Right cardiac atrium (tissue), 5 donors: ENCODE measurements at regions of chr17 and their contacts with region 1.

Region 1: DNA sequence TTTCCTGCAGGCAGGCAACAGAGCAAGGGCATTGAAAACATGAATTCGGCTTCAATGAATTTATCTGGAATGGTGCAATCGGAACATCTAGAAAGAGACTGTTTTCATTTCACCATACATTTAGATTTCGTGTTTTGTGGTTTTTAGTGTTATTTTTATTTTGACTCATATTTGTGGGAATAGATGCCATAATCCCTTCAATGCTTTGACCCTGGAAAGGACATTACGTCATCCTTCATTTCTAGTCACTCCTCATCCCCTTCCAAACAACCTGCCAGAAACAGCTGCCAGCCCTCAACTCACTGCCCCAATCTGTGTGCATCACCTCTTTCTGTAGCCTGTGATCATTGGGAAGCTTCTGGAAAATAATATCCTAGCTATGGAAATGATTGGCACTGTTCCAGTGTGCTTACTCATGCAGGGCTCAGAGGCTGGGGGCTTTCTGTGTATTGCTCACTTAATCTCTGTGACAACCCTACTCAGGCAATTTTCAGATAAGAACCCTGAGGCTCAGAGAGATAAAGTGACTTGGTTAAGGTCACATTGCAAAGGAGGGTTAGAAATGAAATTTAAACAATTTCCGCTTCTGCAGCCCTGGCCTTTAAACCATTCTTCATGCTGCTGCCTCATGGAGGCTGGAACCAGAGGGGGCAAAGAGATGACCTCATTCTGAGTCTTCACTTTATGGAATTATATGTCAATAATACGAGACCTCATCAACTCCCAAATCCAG is 9.5 kb upstream of the KSR1 start:
- DNase-seq: peak in 1 of 3 donors; percentile 50
- ATAC-seq: peak; percentile 14 to 61
- H3K4me3 ChIP-seq: no peak overlapping the region
- H3K27ac ChIP-seq: no peak overlapping the region
- H3K4me1 ChIP-seq: no peaks in the 10 kb centered on the region
- H3K27me3 ChIP-seq: no peaks in the 10 kb centered on the region

Region 2: DNA sequence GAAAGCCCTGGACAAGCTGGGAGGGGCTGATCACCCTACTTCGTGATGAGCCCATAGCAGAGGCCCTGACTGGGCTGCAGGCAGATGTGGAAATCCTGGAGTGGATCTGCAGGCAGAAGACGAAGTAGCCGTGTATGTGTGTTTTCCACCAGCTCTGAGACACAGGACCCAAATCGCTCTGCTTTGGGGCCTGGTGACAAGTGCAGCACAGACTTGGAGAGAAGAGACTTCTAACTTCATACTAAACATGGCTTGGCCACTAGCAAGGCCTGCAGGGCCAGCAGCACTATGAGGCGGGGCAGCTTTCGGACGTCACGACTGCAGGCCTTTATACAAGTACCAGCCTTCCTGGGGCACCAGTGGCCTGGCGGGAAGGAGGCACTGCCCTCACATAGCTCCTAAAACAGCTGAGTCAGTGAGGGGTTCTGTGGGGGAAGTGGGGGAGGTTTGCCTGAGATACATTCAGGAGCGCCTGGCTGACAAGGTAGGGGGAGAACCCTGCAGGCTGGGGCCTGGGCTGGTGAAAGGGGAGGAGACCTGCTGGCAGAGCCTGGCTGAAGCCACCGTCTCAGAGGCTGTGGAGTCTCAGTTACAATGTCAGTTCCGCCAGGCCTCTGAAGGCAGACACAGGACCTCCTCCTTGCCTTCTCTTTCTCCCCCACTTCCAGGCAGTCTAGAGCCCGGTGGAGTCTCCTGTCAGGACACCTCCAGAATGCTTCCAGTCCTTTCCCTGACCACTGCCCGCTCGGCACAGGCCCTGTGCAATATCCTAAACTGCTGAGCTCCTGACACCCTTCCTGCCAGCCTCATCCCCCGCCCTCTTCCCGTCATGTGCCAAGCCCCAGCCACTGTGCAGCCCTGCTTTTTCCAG is 79.4 kb before region 1 on chr17:
- intact Hi-C with region 1: loop called in 1 of 4 experiments (anchors 10 kb)
- DNase-seq: no peak
- ATAC-seq: peak; percentile 49 to 68
- H3K4me3 ChIP-seq: no peak overlapping the region
- H3K27ac ChIP-seq: no peak overlapping the region
- H3K4me1 ChIP-seq: no peaks in the 10 kb centered on the region
- H3K27me3 ChIP-seq: no peaks in the 10 kb centered on the region

Region 3: GRCh38 chr17:27506348-27507231 is 59.9 kb after region 1 on chr17:
- intact Hi-C with region 1: no loop called
- DNase-seq: no peak
- ATAC-seq: no peak
- H3K4me3 ChIP-seq: no peak overlapping the region
- H3K27ac ChIP-seq: no peak overlapping the region
- H3K4me1 ChIP-seq: peaks cover 3% of the 10 kb centered on the region
- H3K27me3 ChIP-seq: no peaks in the 10 kb centered on the region

Region 4: GRCh38 chr17:27609611-27610303 is 163.0 kb after region 1 on chr17:
- intact Hi-C with region 1: no loop called
- DNase-seq: peak in 2 of 3 donors; percentile 67 to 69
- ATAC-seq: peak; percentile 53 to 61
- H3K4me3 ChIP-seq: no peak overlapping the region
- H3K27ac ChIP-seq: no peak overlapping the region
- H3K4me1 ChIP-seq: no peaks in the 10 kb centered on the region
- H3K27me3 ChIP-seq: no peaks in the 10 kb centered on the region